ENCODE measurements at regions of chr7 and their contacts with region 1.

Region 1: GRCh38 chr7:140126435-140127034 is 50.2 kb downstream of the KDM7A start:
- DNase-seq: no peak
- H3K4me3 ChIP-seq: no peak overlapping the region
- H3K4me3 Mint-ChIP-seq: no peak overlapping the region
- H3K27ac ChIP-seq: no peak overlapping the region
- H3K27ac Mint-ChIP-seq: peak overlapping the region in 1 of 7 donors; percentile 37
- H3K4me1 ChIP-seq: no peaks in the 10 kb centered on the region
- H3K4me1 Mint-ChIP-seq: peaks cover 0 to 5% (median under 1%) of the 10 kb centered on the region in 4 donors
- H3K27me3 ChIP-seq: no peaks in the 10 kb centered on the region
- H3K27me3 Mint-ChIP-seq: no peaks in the 10 kb centered on the region

Region 2: DNA sequence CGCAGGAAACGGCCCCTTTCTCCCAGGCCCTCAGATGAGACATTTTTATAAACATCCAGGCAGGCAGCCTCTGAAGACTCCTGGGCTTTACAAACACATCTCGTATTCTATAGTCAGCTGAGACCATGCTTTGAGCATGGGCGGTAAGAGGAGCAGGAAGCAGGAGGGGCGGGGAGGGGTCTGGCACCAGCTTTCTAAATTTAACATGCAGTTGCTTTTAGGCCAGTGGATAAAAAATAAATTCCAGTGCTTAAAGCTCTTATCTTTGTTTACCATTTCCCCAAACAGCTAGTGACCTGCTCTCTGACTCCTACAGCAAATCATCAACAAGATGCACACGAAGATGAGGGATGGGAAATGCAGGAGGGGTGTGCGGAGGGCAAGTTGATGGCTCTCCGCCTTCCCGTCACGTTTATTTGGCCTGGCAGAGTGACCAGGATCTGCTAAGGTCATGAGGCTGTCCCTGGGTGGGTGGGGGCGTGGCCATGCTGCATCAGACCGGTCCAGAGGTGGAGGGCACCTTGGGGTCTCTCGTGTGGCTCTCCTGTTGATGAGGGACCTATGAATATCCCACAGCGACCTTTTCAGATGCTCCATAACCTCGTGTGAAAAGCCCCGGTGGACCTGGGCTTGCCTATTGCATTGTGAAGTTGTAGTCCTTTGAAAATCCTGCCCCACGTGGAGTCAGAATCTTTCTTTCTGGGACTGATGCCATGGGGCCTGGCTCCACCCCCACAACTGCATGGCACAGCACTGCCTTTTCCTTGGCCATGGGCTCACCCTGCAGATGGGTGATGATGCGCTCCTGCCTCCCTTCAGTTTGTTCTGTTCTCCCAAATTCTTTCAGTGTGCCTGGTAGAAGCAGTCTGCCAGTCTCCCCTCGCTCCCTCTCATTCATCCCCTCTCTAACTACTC is 131.3 kb before region 1 on chr7:
- CTCF ChIA-PET with region 1: no interaction called
- POLR2A ChIA-PET with region 1: no interaction called
- intact Hi-C with region 1: no loop called
- DNase-seq: no peak
- H3K4me3 ChIP-seq: no peak overlapping the region
- H3K4me3 Mint-ChIP-seq: no peak overlapping the region
- H3K27ac ChIP-seq: no peak overlapping the region
- H3K27ac Mint-ChIP-seq: no peak overlapping the region
- H3K4me1 ChIP-seq: no peaks in the 10 kb centered on the region
- H3K4me1 Mint-ChIP-seq: no peaks in the 10 kb centered on the region
- H3K27me3 ChIP-seq: no peaks in the 10 kb centered on the region
- H3K27me3 Mint-ChIP-seq: no peaks in the 10 kb centered on the region

Region 3: DNA sequence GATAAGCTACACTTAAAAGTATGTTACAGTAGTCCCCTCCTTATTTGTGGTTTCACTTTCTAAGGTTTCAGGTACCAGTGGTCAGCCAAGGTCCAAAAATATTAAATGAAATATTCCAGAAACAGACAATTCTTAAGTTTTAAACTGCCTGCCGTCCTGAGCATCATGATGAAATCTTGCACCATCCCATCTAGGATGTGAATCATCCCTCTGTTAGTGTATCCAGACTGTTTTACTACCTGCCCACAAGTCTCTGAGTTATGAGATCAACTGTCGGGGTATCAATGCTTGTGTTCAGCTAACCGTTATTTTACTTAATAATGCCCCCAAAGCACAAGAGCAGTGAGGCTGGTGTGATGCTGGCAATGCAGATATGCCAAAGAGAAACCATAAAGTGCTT is 38.9 kb after region 1 on chr7:
- CTCF ChIA-PET with region 1: no interaction called
- POLR2A ChIA-PET with region 1: no interaction called
- intact Hi-C with region 1: loop called (anchors 5 kb)
- DNase-seq: no peak
- H3K4me3 ChIP-seq: no peak overlapping the region
- H3K4me3 Mint-ChIP-seq: peak overlapping the region in 4 of 8 donors; percentile 5 to 59 (median 22)
- H3K27ac ChIP-seq: no peak overlapping the region
- H3K27ac Mint-ChIP-seq: peak overlapping the region in 2 of 7 donors; percentile 38 to 59
- H3K4me1 ChIP-seq: peaks cover 70% of the 10 kb centered on the region
- H3K4me1 Mint-ChIP-seq: peaks cover 46 to 74% (median 59%) of the 10 kb centered on the region in 4 donors
- H3K27me3 ChIP-seq: no peaks in the 10 kb centered on the region
- H3K27me3 Mint-ChIP-seq: no peaks in the 10 kb centered on the region

Measured in CD4-positive, alpha-beta memory T cell (primary cell).